Mammary epithelial cell (primary cell): ENCODE measurements at regions of chr11 and their contacts with region 1.

Region 1: GRCh38 chr11:114209904-114210303 is 86.3 kb upstream of the NNMT start:
- DNase-seq: no peak
- H3K4me3 ChIP-seq: no peak overlapping the region
- H3K27ac ChIP-seq: no peak overlapping the region
- H3K4me1 ChIP-seq: no peaks in the 10 kb centered on the region
- H3K27me3 ChIP-seq: no peaks in the 10 kb centered on the region
- CTCF ChIP-seq: no peak

Region 2: DNA sequence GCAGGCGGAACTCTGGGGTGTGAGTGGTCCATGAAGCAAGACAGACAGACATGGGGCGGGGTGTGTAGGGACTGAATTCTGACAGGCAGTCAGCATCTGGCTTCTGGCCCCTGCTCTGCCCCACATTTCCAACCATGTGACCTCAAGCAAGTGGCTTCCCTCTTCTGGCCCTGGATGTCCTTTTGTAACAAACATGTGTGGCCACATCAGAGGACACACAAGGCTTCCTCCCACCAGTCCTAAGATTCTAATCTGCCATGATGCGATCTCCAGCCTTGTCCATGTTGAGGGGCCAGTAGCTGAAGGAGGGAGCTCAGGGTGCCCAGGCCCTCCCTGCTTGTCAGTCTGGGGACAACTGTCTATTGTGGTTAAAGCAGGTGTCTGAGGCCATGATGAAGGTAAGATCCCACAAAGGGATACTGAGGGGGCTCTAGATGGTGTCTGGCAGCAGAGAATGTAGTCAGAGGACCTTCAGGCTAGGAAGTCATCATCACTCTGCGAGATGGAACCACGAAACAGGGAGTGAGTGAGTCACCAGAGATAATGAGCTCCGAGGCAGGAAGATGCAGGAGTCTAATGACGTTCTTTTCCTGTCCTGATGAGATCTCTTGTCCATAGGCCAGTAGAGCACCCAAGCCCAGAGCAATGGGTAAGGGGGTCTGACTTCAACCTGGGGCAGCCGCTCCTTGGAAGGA is 762.1 kb before region 1 on chr11:
- CTCF ChIA-PET with region 1: no interaction called
- dilution Hi-C with region 1: no loop called
- in situ Hi-C with region 1: no loop called
- intact Hi-C with region 1: no loop called
- DNase-seq: peak; percentile 93
- H3K4me3 ChIP-seq: no peak overlapping the region
- H3K27ac ChIP-seq: peak overlapping the region; percentile 97
- H3K4me1 ChIP-seq: peaks cover 35% of the 10 kb centered on the region
- H3K27me3 ChIP-seq: no peaks in the 10 kb centered on the region
- CTCF ChIP-seq: no peak

Region 3: DNA sequence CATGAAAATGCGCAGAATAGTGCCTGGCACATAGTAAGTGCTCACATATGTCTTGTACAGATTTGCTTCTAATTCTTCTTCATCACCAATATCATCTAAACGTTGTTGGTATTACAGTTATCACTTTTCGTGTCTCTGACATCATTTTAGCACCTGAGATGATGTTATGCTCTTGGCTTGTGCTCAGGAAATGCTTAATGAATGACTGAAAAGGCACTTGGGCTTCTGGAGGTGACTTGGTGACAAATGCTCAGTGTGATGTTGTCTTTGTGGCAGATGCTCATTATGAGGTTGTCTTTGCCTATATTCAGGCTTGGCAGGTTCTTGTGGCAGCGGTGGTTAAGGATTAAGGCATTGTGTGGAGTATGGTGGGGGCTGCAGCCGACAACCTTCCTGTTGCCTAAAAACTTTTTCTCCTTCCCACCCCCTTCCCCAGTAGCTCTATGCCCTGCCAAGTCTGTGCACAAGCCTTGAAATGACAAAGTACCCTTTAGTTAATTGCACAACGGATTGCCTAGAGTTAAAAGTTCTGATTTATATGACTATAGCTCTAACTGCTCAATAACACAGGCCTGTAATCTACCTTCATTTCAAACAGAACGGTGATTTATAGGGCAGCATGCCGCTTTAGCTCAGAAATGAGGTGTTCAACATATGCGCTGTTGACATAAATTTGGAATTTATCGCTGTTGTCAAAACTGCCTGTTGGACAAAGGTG is 67.9 kb before region 1 on chr11:
- CTCF ChIA-PET with region 1: no interaction called
- dilution Hi-C with region 1: loop called (anchors 5 kb)
- in situ Hi-C with region 1: no loop called
- intact Hi-C with region 1: no loop called
- DNase-seq: no peak
- H3K4me3 ChIP-seq: no peak overlapping the region
- H3K27ac ChIP-seq: no peak overlapping the region
- H3K4me1 ChIP-seq: no peaks in the 10 kb centered on the region
- H3K27me3 ChIP-seq: no peaks in the 10 kb centered on the region
- CTCF ChIP-seq: no peak

Region 4: GRCh38 chr11:114275280-114275679 is 65.4 kb after region 1 on chr11:
- CTCF ChIA-PET with region 1: no interaction called
- dilution Hi-C with region 1: no loop called
- in situ Hi-C with region 1: no loop called
- intact Hi-C with region 1: no loop called
- DNase-seq: no peak
- H3K4me3 ChIP-seq: no peak overlapping the region
- H3K27ac ChIP-seq: no peak overlapping the region
- H3K4me1 ChIP-seq: peaks cover 7% of the 10 kb centered on the region
- H3K27me3 ChIP-seq: peaks cover 6% of the 10 kb centered on the region
- CTCF ChIP-seq: no peak

Region 5: GRCh38 chr11:114326776-114327175 is 116.9 kb after region 1 on chr11:
- CTCF ChIA-PET with region 1: no interaction called
- dilution Hi-C with region 1: no loop called
- in situ Hi-C with region 1: no loop called
- intact Hi-C with region 1: no loop called
- DNase-seq: no peak
- H3K4me3 ChIP-seq: no peak overlapping the region
- H3K27ac ChIP-seq: no peak overlapping the region
- H3K4me1 ChIP-seq: no peaks in the 10 kb centered on the region
- H3K27me3 ChIP-seq: no peaks in the 10 kb centered on the region
- CTCF ChIP-seq: no peak